Activated naive CD4-positive, alpha-beta T cell treated with anti-CD3 and anti-CD28 coated beads for 36 hours (primary cell): ENCODE measurements at regions of chr11 and their contacts with region 1.

Region 1: GRCh38 chr11:85854557-85855340 is 434 bp upstream of the CCDC83 start:
- DNase-seq: peak; percentile 92
- H3K4me3 Mint-ChIP-seq: peak overlapping the region; percentile 88
- H3K27ac Mint-ChIP-seq: peak overlapping the region; percentile 89
- H3K4me1 Mint-ChIP-seq: peaks cover 7% of the 10 kb centered on the region
- H3K27me3 Mint-ChIP-seq: no peaks in the 10 kb centered on the region

Region 2: GRCh38 chr11:85627998-85628770 is 226.6 kb before region 1 on chr11 and contains the start of gene TMEM126B:
- CTCF ChIA-PET with region 1: no interaction called
- intact Hi-C with region 1: loop called (anchors 1 kb)
- DNase-seq: peak; percentile 98
- H3K4me3 Mint-ChIP-seq: peak within 1 kb of the TSS; percentile 99
- H3K27ac Mint-ChIP-seq: peak within 1 kb of the TSS; percentile 96
- H3K4me1 Mint-ChIP-seq: peaks cover 33% of the 10 kb centered on the region
- H3K27me3 Mint-ChIP-seq: no peaks in the 10 kb centered on the region
- total RNA-seq, gene TMEM126B: 72.6 to 79.0 TPM

Region 3: DNA sequence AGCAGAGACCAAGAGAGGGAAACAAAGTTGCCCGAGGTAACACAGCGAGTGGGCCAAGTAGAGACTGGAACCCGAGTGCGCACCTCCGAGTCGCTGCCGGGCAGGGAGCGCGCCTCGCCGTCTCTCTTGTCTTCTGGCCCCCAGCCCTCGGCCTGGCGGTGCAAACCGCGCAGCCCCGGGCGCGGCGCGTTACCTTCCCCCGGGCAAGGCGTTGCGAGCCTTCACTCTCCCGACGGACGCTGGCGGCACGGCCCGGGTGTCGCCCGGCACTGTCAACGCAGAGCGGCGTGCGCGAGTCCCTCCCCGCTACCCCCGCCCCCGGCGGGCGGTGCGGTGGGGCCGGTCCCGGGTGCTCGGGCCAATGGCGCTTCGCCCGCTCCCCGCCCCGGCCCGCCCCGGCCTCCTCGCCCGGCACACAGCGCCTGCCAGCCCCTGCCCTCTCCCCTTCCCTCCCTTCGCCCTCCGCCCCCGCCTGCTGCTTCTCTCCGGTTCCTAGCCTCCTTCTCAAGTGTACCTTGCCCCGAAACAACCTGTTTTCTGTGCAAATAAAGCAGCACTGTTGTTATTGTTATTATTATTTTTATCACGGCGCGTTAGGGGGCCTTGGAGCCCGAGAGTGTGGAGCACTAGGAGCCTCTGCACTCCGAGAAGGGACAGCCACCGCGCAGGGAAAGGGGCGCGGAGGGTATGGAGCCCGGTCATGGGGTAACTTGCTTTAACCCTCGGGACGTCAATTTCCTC is 43.7 kb before region 1 on chr11 and contains the start of gene SYTL2:
- CTCF ChIA-PET with region 1: no interaction called
- intact Hi-C with region 1: loop called (anchors 1 kb)
- DNase-seq: peak; percentile 77
- H3K4me3 Mint-ChIP-seq: peak within 1 kb of the TSS; percentile 81
- H3K27ac Mint-ChIP-seq: no peak within 1 kb of the TSS
- H3K4me1 Mint-ChIP-seq: peaks cover 33% of the 10 kb centered on the region
- H3K27me3 Mint-ChIP-seq: no peaks in the 10 kb centered on the region
- total RNA-seq, gene SYTL2: 13.8 to 13.9 TPM

Region 4: DNA sequence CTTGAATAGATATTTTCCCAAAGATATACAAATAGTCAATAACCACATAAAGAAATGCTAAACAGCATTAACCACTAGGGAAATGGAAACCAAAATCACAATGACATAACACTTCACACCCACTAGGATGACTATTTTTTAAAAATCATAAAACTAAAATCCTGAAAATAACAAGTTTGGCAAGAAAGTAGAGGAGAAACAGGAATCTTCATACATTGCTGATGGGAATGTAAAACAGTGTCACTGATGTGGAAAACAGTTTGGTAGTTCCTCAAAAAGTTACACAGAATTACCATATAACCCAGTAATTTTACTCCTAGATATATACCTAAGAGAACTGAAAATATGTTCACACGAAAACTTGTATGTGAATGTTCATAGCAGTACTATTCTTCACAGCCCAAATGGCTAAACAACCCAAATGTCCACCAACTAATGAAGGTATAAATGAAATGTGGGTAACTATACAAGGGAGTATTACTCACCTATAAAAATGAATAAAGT is 201.7 kb after region 1 on chr11:
- CTCF ChIA-PET with region 1: no interaction called
- intact Hi-C with region 1: no loop called
- DNase-seq: no peak
- H3K4me3 Mint-ChIP-seq: no peak overlapping the region
- H3K27ac Mint-ChIP-seq: peak overlapping the region; percentile 65
- H3K4me1 Mint-ChIP-seq: peaks cover 90% of the 10 kb centered on the region
- H3K27me3 Mint-ChIP-seq: no peaks in the 10 kb centered on the region

Region 5: GRCh38 chr11:86193297-86194095 is 338.7 kb after region 1 on chr11:
- CTCF ChIA-PET with region 1: interaction called, 3 read pairs
- intact Hi-C with region 1: loop called (anchors 1 kb)
- DNase-seq: peak; percentile 74
- H3K4me3 Mint-ChIP-seq: peak overlapping the region; percentile 52
- H3K27ac Mint-ChIP-seq: peak overlapping the region; percentile 73
- H3K4me1 Mint-ChIP-seq: peaks cover 19% of the 10 kb centered on the region
- H3K27me3 Mint-ChIP-seq: no peaks in the 10 kb centered on the region

Region 6: DNA sequence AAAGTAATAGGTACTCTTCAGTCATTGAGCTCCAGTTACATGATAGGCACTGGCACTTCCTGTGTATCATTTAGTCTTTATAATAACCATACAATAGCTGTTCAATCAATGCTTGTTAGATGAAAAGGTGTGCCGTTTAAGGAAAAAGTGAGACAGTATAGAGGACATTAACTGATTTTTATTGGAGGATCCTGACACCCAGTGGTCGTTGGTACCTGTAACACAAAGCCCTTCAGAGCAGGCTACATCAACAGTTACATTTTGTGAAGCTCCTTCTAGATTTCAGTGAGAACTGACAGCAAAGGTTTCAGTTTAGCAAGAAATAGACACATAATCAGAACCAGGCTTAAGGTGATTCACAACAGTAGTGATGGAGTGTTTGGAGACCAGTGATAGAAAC is 564.2 kb after region 1 on chr11:
- CTCF ChIA-PET with region 1: no interaction called
- intact Hi-C with region 1: loop called (anchors 1 kb)
- DNase-seq: peak; percentile 18
- H3K4me3 Mint-ChIP-seq: no peak overlapping the region
- H3K27ac Mint-ChIP-seq: no peak overlapping the region
- H3K4me1 Mint-ChIP-seq: peaks cover 3% of the 10 kb centered on the region
- H3K27me3 Mint-ChIP-seq: no peaks in the 10 kb centered on the region

Region 7: GRCh38 chr11:86671682-86672621 is 817.2 kb after region 1 on chr11 and contains the start of gene ME3:
- CTCF ChIA-PET with region 1: no interaction called
- intact Hi-C with region 1: loop called (anchors 10 kb)
- DNase-seq: peak; percentile 69
- H3K4me3 Mint-ChIP-seq: peak within 1 kb of the TSS; percentile 71
- H3K27ac Mint-ChIP-seq: peak within 1 kb of the TSS; percentile 56
- H3K4me1 Mint-ChIP-seq: peaks cover 20% of the 10 kb centered on the region
- H3K27me3 Mint-ChIP-seq: peaks cover 12% of the 10 kb centered on the region
- total RNA-seq, gene ME3: 6.0 to 6.7 TPM

Region 8: GRCh38 chr11:86919557-86920210 is 1064.9 kb after region 1 on chr11:
- CTCF ChIA-PET with region 1: no interaction called
- intact Hi-C with region 1: loop called (anchors 1 kb)
- DNase-seq: peak; percentile 19
- H3K4me3 Mint-ChIP-seq: no peak overlapping the region
- H3K27ac Mint-ChIP-seq: no peak overlapping the region
- H3K4me1 Mint-ChIP-seq: peaks cover 4% of the 10 kb centered on the region
- H3K27me3 Mint-ChIP-seq: no peaks in the 10 kb centered on the region